ENCODE measurements at regions of chr12 and their contacts with region 1.

Region 1: DNA sequence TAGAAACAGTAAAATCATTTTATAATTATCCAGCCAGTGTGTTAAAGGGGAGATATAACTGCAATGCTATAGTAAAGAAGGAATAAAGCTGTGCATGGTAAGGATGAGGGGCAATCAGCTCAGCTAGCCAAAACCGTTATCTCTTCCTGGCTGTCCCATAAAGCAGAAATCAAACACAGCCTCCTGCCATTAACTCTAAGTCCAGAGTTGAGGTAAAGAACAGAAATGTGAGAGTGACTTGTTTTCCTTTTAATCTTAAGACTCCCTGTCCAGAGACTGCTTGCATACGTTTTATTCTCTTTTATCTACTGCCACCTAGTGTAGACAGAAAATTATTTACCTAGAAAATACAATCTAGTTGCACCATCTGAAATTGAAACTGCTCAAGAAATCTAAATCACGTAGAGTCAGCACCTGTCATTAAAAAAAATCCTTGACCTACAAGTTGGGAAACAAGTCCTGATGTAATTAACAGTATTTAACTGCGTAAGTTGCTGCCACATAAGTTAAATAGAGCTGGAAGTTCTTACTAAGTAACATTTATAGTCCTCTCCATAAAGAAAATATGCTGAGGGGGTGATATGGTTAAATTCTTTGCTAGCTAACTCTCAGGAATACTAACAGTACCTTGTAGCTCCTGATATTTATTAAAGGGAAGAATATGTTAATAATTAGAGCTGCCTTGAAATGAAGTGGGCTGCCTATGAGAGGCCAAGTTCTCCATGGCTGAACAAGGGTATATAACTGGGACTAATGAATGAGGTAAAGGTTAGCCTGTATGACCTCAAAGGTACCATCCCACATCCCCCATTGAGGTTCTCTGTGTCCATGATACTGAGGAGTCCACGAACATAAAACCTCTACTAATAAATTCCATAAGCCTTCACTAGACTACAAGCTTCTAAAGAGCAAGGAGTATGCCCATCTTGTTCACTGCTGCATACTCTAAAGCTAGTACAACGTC is 62.7 kb downstream of the GALNT4 start:
- DNase-seq: peak in 2 of 9 experiments; percentile 59 to 71
- ATAC-seq: peak; percentile 73
- H3K4me3 ChIP-seq: no peak overlapping the region
- H3K4me3 Mint-ChIP-seq: peak overlapping the region; percentile 50
- H3K27ac ChIP-seq: no peak overlapping the region
- H3K27ac Mint-ChIP-seq: no peak overlapping the region
- H3K4me1 ChIP-seq: peaks cover 5% of the 10 kb centered on the region
- H3K4me1 Mint-ChIP-seq: peaks cover 20% of the 10 kb centered on the region
- H3K27me3 ChIP-seq: no peaks in the 10 kb centered on the region
- H3K27me3 Mint-ChIP-seq: no peaks in the 10 kb centered on the region
- CTCF ChIP-seq: peak; percentile 77

Region 2: DNA sequence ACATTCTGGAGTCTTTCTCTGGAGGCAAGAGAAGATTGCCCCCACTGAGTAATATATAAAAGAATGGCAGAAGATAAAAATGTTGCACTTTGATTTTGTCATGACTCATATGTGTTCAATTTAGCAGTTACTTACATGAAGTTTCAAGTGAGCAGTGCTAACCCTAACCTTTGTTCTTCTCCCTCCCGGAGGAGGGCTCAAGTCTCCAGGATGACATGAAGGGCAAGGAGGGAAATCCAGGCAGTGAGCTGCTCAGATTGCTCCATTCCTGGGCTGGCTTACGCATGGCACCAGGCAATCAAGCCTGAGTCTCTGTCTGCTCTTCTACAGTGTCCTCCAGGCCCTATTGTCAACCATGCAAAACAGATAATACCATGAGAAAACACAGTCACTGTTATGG is 432.0 kb before region 1 on chr12:
- CTCF ChIA-PET with region 1: interaction called, 19 read pairs
- POLR2A ChIA-PET with region 1: interaction called, 3 read pairs
- intact Hi-C with region 1: no loop called
- DNase-seq: no peak
- ATAC-seq: no peak
- H3K4me3 ChIP-seq: no peak overlapping the region
- H3K4me3 Mint-ChIP-seq: no peak overlapping the region
- H3K27ac ChIP-seq: no peak overlapping the region
- H3K27ac Mint-ChIP-seq: no peak overlapping the region
- H3K4me1 ChIP-seq: no peaks in the 10 kb centered on the region
- H3K4me1 Mint-ChIP-seq: no peaks in the 10 kb centered on the region
- H3K27me3 ChIP-seq: no peaks in the 10 kb centered on the region
- H3K27me3 Mint-ChIP-seq: peaks cover 3% of the 10 kb centered on the region
- CTCF ChIP-seq: no peak

Region 3: DNA sequence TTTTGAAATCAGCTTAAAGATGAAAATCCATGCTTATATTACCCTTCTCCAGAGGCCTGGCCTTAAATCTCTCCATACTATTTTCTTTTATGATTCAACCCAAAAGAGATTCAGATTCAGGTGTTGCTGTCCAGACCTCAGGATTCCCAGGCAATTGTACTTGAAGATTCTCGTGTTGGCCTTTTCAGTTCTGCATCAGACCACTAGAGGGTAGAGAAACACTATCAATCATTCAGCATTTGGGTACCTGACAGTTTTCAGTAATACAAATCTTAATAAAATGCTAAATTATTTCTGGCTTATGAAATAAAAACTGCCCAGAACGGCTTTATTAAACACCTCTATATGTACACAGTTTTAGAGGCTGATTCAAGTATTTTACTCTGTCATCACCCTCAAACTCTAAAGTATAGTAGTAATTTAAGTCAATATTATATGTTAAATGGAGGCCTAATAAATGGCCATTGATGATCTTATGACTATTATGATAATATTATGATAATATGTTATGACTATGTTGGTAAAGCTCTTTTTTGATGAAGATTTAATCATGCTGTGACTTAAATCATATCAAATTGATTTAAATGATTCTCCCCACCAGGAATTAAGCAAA is 410.8 kb before region 1 on chr12:
- CTCF ChIA-PET with region 1: interaction called, 21 read pairs
- POLR2A ChIA-PET with region 1: no interaction called
- intact Hi-C with region 1: loop called (anchors 1 kb)
- DNase-seq: peak in 3 of 9 experiments; percentile 19 to 72 (median 64)
- ATAC-seq: peak; percentile 70
- H3K4me3 ChIP-seq: no peak overlapping the region
- H3K4me3 Mint-ChIP-seq: no peak overlapping the region
- H3K27ac ChIP-seq: no peak overlapping the region
- H3K27ac Mint-ChIP-seq: no peak overlapping the region
- H3K4me1 ChIP-seq: no peaks in the 10 kb centered on the region
- H3K4me1 Mint-ChIP-seq: no peaks in the 10 kb centered on the region
- H3K27me3 ChIP-seq: no peaks in the 10 kb centered on the region
- H3K27me3 Mint-ChIP-seq: no peaks in the 10 kb centered on the region
- CTCF ChIP-seq: peak; percentile 90

Region 4: DNA sequence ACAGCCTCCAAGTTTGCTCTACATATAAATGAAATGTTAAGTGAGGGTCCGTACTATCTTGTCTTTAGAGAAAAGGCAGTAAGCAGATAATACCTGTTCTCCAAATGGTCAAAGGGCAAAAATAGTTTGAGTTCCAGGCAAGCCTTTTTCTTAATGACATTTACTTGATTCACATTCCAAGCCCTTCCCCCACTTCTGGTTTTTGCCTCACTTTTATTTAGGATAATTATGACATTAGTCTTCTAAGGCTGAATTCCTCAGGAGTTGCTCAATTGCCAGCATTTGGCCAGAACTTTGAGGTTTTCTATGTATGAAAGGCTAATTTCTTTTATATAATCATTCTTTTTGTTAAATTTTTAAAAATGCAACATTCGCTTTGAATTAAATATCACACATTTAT is 47.1 kb before region 1 on chr12:
- CTCF ChIA-PET with region 1: no interaction called
- POLR2A ChIA-PET with region 1: no interaction called
- intact Hi-C with region 1: no loop called
- DNase-seq: no peak
- ATAC-seq: no peak
- H3K4me3 ChIP-seq: no peak overlapping the region
- H3K4me3 Mint-ChIP-seq: no peak overlapping the region
- H3K27ac ChIP-seq: no peak overlapping the region
- H3K27ac Mint-ChIP-seq: no peak overlapping the region
- H3K4me1 ChIP-seq: no peaks in the 10 kb centered on the region
- H3K4me1 Mint-ChIP-seq: no peaks in the 10 kb centered on the region
- H3K27me3 ChIP-seq: no peaks in the 10 kb centered on the region
- H3K27me3 Mint-ChIP-seq: no peaks in the 10 kb centered on the region
- CTCF ChIP-seq: no peak

Region 5: GRCh38 chr12:89493670-89494302 is 31.9 kb after region 1 on chr12:
- CTCF ChIA-PET with region 1: interaction called, 11 read pairs
- POLR2A ChIA-PET with region 1: no interaction called
- intact Hi-C with region 1: no loop called
- DNase-seq: no peak
- ATAC-seq: no peak
- H3K4me3 ChIP-seq: no peak overlapping the region
- H3K4me3 Mint-ChIP-seq: no peak overlapping the region
- H3K27ac ChIP-seq: no peak overlapping the region
- H3K27ac Mint-ChIP-seq: no peak overlapping the region
- H3K4me1 ChIP-seq: no peaks in the 10 kb centered on the region
- H3K4me1 Mint-ChIP-seq: peaks cover 8% of the 10 kb centered on the region
- H3K27me3 ChIP-seq: no peaks in the 10 kb centered on the region
- H3K27me3 Mint-ChIP-seq: no peaks in the 10 kb centered on the region
- CTCF ChIP-seq: no peak

Region 6: DNA sequence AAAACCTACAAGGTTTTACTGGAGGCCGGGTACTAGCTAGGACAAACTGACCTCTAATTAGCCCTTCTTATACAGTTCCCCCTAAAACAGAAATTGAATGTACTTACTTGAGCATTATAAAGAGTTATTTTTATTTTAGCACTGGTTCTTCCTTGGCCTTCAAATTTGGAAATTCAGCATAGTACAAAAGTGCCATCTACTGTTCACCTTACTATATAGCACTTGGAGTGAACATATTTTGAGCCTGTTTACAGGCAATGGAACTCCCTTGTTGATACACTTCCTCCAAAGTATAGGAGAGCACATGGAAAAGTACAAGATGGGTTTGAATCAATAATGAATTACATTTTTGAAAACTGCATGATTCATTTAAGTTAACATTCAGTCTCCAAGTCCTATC is 67.8 kb after region 1 on chr12:
- CTCF ChIA-PET with region 1: interaction called, 89 read pairs
- POLR2A ChIA-PET with region 1: interaction called, 11 read pairs
- intact Hi-C with region 1: loop called in 1 of 2 experiments (anchors 1 kb)
- DNase-seq: peak in 2 of 9 experiments; percentile 61 to 70
- ATAC-seq: peak; percentile 33
- H3K4me3 ChIP-seq: no peak overlapping the region
- H3K4me3 Mint-ChIP-seq: no peak overlapping the region
- H3K27ac ChIP-seq: no peak overlapping the region
- H3K27ac Mint-ChIP-seq: no peak overlapping the region
- H3K4me1 ChIP-seq: no peaks in the 10 kb centered on the region
- H3K4me1 Mint-ChIP-seq: peaks cover 21% of the 10 kb centered on the region
- H3K27me3 ChIP-seq: no peaks in the 10 kb centered on the region
- H3K27me3 Mint-ChIP-seq: no peaks in the 10 kb centered on the region
- CTCF ChIP-seq: peak; percentile 73

Region 7: GRCh38 chr12:90959538-90960139 is 1497.7 kb after region 1 on chr12:
- CTCF ChIA-PET with region 1: no interaction called
- POLR2A ChIA-PET with region 1: no interaction called
- intact Hi-C with region 1: loop called in 1 of 2 experiments (anchors 10 kb)
- DNase-seq: peak in 3 of 9 experiments; percentile 9 to 49 (median 37)
- ATAC-seq: no peak
- H3K4me3 ChIP-seq: no peak overlapping the region
- H3K4me3 Mint-ChIP-seq: no peak overlapping the region
- H3K27ac ChIP-seq: no peak overlapping the region
- H3K27ac Mint-ChIP-seq: no peak overlapping the region
- H3K4me1 ChIP-seq: no peaks in the 10 kb centered on the region
- H3K4me1 Mint-ChIP-seq: no peaks in the 10 kb centered on the region
- H3K27me3 ChIP-seq: no peaks in the 10 kb centered on the region
- H3K27me3 Mint-ChIP-seq: peaks cover 2% of the 10 kb centered on the region
- CTCF ChIP-seq: peak; percentile 70

Measured in CD8-positive, alpha-beta T cell (primary cell).